SK-N-SH (cell line): ENCODE measurements at regions of chr3 and their contacts with region 1.

Region 1: DNA sequence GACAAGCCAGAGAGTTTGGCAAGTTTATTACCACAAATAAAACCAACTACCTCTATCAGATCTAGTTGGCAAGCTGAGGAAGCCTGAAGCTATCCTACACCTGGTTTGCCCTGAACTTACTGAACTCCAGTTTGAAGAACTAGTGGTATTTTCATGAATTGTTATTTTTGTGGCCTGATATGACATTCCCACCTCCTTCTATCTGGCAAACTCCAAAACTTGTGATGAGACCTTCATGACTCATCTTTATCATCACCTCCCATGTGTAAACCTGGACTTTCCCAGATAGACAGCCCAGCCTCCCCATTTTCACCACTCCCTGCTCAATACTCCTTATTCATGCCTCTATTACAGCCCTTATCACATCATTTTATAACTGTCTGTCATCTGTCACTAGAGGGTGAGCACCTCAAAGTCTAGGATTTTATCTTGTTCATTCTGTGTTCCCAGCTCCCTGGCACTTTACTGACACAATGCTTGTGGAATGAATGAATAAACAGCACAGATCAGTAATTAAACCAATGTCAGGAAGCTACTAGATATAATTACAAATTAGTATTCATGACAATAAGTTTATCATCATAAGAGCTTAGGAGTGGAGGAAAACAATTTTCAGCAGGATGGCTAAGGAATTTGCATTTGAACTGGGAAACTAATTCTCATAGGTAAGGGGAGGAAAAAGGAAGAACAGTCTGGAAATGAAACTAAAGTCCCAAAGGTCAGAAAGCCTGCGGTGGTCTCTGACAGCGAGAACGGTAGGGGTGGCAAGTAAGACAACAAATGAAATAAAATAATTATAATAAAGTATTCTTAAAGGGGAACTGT is 13.2 kb upstream of the TRANK1 start:
- DNase-seq: no peak
- H3K4me3 ChIP-seq: no peak overlapping the region
- H3K27ac ChIP-seq: peak overlapping the region in 1 of 2 experiments; percentile 34; a peak in 2 of 4 replicates
- H3K4me1 ChIP-seq: peaks cover 12 to 29% of the 10 kb centered on the region in 2 experiments; a peak in 3 of 4 replicates
- H3K27me3 ChIP-seq: no peaks in the 10 kb centered on the region; the same call in 1 of the 2 replicates
- CTCF ChIP-seq: no peak
- EP300 ChIP-seq: 0 out of 4 replicates have a peak, but pooled peaks of 1 of the 2 experiments have one; percentile 14
- RAD21 ChIP-seq: no peak

Region 2: DNA sequence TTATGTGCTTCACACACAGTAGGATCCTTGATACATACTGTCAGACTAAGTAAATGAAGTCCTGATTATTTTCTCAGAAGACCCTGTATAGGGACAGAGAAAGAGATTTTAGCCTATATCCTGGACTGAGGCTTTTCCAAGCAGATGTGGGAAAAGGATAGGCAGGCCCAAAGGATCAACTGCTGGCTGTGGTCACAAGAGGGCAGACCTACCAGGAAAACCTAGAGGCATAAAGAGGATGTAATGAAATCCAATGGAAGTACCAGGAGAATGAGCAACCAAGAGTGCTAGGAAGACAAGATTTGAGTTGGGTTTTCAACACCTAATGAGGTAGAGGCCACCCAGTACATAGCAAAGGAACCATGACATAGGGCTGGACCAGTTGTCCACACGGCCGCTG is 216.8 kb before region 1 on chr3:
- CTCF ChIA-PET with region 1: interaction called, 11 read pairs
- POLR2A ChIA-PET with region 1: no interaction called
- DNase-seq: no peak
- H3K4me3 ChIP-seq: no peak overlapping the region
- H3K27ac ChIP-seq: no peak overlapping the region
- H3K4me1 ChIP-seq: peaks cover 0 to 32% of the 10 kb centered on the region in 2 experiments; a peak in 2 of 4 replicates
- H3K27me3 ChIP-seq: no peaks in the 10 kb centered on the region
- CTCF ChIP-seq: peak; percentile 23; the same call in 1 of the 2 replicates
- EP300 ChIP-seq: no peak
- RAD21 ChIP-seq: peak; percentile 46

Region 3: DNA sequence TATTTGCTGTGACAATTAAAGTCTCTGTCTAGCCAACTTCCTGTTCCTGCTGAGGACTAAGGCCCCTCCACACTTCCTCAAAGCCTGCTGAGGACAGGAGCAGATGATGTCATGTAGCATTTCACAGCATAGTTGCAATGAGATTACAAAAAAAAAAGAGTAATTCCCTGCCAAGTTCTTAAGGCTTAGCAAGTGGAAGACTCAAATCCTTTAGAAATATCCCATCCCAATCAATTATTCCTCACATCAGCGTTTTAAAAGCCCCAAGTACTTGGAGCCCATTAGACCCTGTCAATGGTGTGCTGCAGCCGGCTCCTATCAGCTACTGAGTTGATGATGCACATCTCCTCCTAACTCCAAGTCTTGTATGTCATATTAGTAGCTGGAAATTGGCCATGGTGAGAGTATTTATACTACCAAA is 64.9 kb before region 1 on chr3:
- CTCF ChIA-PET with region 1: interaction called, 11 read pairs
- POLR2A ChIA-PET with region 1: no interaction called
- DNase-seq: no peak
- H3K4me3 ChIP-seq: no peak overlapping the region
- H3K27ac ChIP-seq: no peak overlapping the region
- H3K4me1 ChIP-seq: peaks cover 0 to 13% of the 10 kb centered on the region in 2 experiments; a peak in 2 of 4 replicates
- H3K27me3 ChIP-seq: no peaks in the 10 kb centered on the region
- CTCF ChIP-seq: no peak
- EP300 ChIP-seq: no peak
- RAD21 ChIP-seq: no peak

Region 4: GRCh38 chr3:36911990-36912804 is 45.9 kb before region 1 on chr3:
- CTCF ChIA-PET with region 1: interaction called, 10 read pairs
- POLR2A ChIA-PET with region 1: no interaction called
- DNase-seq: no peak
- H3K4me3 ChIP-seq: no peak overlapping the region
- H3K27ac ChIP-seq: no peak overlapping the region
- H3K4me1 ChIP-seq: peaks cover 0 to 11% of the 10 kb centered on the region in 2 experiments; a peak in 2 of 4 replicates
- H3K27me3 ChIP-seq: no peaks in the 10 kb centered on the region
- CTCF ChIP-seq: no peak
- EP300 ChIP-seq: no peak
- RAD21 ChIP-seq: no peak

Region 5: GRCh38 chr3:36969540-36970432 is 11.7 kb after region 1 on chr3:
- CTCF ChIA-PET with region 1: interaction called, 29 read pairs
- POLR2A ChIA-PET with region 1: interaction called, 5 read pairs
- DNase-seq: peak; percentile 88
- H3K4me3 ChIP-seq: no peak overlapping the region
- H3K27ac ChIP-seq: peak overlapping the region; percentile 36 to 91; a peak in 3 of 4 replicates
- H3K4me1 ChIP-seq: peaks cover 10 to 13% of the 10 kb centered on the region in 2 experiments; a peak in 3 of 4 replicates
- H3K27me3 ChIP-seq: no peaks in the 10 kb centered on the region
- CTCF ChIP-seq: no peak
- EP300 ChIP-seq: peak in 1 of 2 experiments; percentile 53; a peak in 1 of 4 replicates
- RAD21 ChIP-seq: peak; percentile 38; the same call in 1 of the 2 replicates